Testis (tissue), 5 donors: ENCODE measurements at regions of chr10 and their contacts with region 1.

Region 1: GRCh38 chr10:132463333-132464252 is 66.6 kb downstream of the PWWP2B start:
- DNase-seq: no peak
- H3K4me3 ChIP-seq: no peak overlapping the region
- H3K27ac ChIP-seq: peak overlapping the region; percentile 69 to 94
- H3K4me1 ChIP-seq: peaks cover 71% of the 10 kb centered on the region
- H3K27me3 ChIP-seq: no peaks in the 10 kb centered on the region
- CTCF ChIP-seq: peak in 1 of 3 experiments; percentile 22
- POLR2A ChIP-seq: no peak

Region 2: DNA sequence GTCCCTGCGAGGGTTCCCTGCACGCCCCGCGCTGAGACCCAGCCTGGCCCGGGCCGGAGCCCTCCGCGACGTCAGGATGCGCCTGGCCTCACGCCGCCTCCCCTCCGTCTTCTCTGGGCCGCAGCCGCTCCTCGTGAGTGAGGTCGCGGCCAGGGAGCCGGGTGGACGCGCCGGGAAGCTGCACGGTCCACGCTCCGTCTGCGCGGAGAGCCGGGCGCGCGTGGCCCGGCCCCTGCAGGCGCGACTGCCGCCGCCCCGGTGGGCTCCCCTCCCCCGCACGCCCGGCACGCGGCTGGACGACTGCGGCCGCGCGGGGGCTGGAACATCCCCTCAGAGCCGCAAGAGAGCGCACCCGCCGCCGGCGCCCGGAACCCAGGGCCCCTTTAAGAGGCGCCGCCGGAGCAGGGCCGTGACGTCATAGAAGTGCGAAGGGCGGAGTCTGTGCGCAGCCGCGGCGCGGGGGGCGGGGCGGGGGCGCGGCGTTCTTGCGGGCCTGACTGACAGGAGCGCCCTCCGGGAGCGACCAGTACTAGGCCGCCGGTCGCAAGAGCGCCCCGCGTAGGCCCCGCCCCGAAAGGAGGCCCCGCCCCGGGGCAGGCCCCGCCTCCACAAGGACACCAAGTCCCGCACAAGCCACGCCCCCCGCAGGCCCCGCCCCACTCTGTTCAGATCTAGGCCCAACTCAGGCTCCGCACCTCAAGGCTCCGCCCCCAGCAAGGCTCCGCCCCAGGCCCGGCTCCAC is 73.5 kb after region 1 on chr10:
- intact Hi-C with region 1: loop called (anchors 10 kb)
- DNase-seq: peak; percentile 100
- H3K4me3 ChIP-seq: peak overlapping the region; percentile 80 to 81
- H3K27ac ChIP-seq: peak overlapping the region; percentile 75 to 91
- H3K4me1 ChIP-seq: peaks cover 32% of the 10 kb centered on the region
- H3K27me3 ChIP-seq: no peaks in the 10 kb centered on the region
- CTCF ChIP-seq: peak; percentile 19 to 63 (median 47)
- POLR2A ChIP-seq: no peak

Region 3: GRCh38 chr10:132808383-132809231 is 345.0 kb after region 1 on chr10:
- intact Hi-C with region 1: no loop called
- DNase-seq: no peak
- H3K4me3 ChIP-seq: no peak overlapping the region
- H3K27ac ChIP-seq: no peak overlapping the region
- H3K4me1 ChIP-seq: no peaks in the 10 kb centered on the region
- H3K27me3 ChIP-seq: no peaks in the 10 kb centered on the region
- CTCF ChIP-seq: no peak
- POLR2A ChIP-seq: no peak